Transverse colon (tissue), 4 donors: ENCODE measurements at regions of chr22 and their contacts with region 1.

Region 1: DNA sequence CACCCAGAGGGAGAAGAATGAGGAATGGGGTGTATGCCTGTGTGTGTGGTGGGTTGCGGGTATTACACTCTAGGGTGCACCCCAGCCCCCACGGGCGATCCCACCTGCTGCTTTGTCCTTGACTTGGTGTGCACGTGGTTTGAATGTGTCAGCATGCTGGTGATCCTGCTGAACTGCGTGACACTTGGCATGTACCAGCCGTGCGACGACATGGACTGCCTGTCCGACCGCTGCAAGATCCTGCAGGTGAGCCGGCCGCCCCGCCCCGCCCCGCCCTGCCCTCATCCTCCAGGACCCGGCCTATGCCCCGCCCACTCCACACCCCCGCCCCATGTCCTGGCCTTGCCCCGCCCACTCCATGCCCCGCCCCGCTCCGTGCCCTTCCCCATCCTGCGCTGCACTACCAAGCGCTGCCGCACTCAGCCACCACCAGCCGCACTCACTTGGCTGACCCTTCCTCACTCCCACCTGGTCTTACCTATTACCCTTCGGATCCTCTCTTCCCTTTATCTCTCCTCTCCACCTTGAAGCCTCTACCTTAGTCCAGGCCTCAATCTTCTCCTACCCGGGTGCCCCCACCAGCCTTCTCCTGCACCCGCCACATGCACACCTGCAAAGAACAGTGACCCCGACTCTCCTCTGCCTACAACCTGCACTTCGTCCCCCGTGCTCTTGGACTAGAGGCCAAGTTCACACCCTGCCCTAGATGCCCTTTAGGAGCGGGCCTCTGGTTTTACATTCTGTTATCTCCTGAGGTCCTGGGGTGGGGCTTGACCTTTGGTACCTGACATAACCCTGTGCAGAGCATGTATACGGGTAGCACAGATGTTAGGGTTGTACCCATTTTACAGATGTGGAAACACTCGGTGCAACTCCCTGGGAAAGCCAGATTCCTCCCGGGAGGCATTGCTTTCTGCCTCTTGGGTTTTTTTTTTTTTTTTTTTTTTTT is 27.7 kb downstream of the CACNA1I start:
- DNase-seq: peak; percentile 89
- H3K4me3 ChIP-seq: no peak overlapping the region
- H3K27ac ChIP-seq: no peak overlapping the region
- H3K4me1 ChIP-seq: peaks cover 0 to 4% (median 3%) of the 10 kb centered on the region in 4 donors
- H3K27me3 ChIP-seq: peaks cover 34% of the 10 kb centered on the region
- CTCF ChIP-seq: peak in 4 of 5 experiments; percentile 16 to 62 (median 36)
- EP300 ChIP-seq: no peak
- POLR2A ChIP-seq: no peak

Region 2: DNA sequence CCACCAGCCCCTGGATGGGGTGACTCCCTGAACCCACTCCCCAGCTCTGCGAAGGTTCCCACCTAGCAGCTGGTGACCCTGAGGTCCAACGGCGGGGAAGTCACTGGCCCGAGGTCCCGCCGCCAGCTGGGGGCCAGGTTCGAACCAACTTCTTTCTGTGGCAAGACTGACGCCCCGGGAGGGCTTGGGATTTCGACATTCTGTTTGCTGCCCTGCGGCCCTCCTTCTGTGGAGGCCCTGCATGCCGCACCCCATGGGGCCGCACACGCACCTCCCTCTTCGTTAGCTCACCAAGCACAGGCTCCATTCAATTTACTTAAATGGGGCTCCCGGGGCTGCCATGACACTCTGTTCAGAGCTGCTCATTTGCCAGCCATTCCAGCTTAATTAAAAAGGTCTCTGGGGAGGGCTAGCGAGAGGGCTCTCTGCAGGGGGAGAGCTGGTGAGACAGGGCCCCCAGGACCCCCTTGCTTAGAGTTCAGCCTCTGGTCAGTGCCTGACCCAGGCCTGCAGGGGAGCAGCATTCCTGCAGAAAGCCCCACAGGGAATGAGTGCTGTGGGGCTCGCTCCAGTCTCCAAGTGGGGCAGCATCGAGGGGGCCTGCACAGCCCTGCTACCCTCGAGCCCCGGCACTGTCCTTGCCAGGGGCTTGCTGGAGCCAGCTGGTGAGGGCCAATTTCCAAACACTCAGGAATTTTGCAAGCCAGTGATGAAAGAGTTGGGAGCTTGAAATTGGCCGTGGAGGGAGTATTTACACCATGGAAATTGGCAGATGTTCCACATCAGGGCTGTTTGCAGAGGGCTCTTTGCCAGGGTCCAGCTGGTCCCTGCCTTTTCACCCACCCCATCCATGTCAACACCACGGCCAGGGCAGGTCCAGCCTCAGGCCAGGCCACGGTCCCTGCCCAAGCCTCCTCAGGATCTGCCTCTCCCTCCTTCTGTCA is 53.0 kb after region 1 on chr22:
- in situ Hi-C with region 1: no loop called
- intact Hi-C with region 1: loop called (anchors 1 kb)
- DNase-seq: no peak
- H3K4me3 ChIP-seq: no peak overlapping the region
- H3K27ac ChIP-seq: no peak overlapping the region
- H3K4me1 ChIP-seq: no peaks in the 10 kb centered on the region
- H3K27me3 ChIP-seq: peaks cover 12% of the 10 kb centered on the region
- CTCF ChIP-seq: no peak
- EP300 ChIP-seq: no peak
- POLR2A ChIP-seq: no peak